Cardiac septum (tissue), 1 donor: ENCODE measurements at regions of chr9 and their contacts with region 1.

Region 1: DNA sequence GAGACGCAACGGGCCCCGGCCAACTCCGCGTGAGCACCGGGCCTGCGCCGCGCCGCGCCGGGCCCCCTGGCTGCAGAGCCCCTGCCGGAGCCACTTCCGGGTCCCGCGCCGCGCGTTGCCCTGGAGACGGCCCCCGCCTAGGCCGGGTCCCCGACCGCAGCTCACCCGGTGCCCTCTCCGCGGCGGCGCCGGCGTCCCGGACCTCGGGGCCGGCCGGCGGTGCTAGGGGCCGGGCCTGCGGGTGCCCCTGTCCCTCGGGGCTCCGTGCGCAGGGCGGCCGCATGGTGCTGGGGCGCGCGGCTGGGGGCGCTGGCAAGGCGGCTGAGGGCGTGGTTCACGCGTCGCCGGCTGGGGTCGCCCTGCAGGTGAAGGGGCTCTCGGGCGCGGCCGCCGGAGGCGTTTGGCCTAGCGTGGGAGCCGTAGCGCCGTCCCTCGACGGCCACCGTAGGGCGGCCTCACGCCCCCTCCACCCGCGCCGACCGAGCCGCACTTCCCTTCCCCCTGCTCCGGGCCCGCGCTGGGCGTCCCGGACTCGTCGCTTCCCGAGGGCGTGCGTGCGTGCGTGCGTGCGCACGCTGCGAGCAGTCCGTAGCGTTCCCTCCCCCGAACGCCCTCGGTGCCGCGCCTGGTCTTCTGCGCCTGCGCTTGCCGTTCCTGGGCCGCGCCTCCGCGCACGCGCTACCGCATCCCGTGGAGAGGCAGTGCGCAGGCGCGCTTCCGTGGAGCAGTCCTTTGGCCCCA is at the start of gene TMEM250:
- DNase-seq: peak; percentile 98
- total RNA-seq, gene TMEM250: 19.8 TPM

Region 2: GRCh38 chr9:135602789-135603481 is 515.6 kb before region 1 on chr9:
- intact Hi-C with region 1: loop called (anchors 5 kb)
- DNase-seq: no peak

Region 3: GRCh38 chr9:135864447-135865049 is 253.9 kb before region 1 on chr9:
- intact Hi-C with region 1: loop called (anchors 2 kb)
- DNase-seq: peak; percentile 78

Region 4: GRCh38 chr9:135961277-135961705 is 157.2 kb before region 1 on chr9 and contains the start of gene UBAC1:
- intact Hi-C with region 1: loop called (anchors 1 kb)
- DNase-seq: peak; percentile 98
- total RNA-seq, gene UBAC1: 90.3 TPM

Region 5: GRCh38 chr9:135978642-135979546 is 139.6 kb before region 1 on chr9:
- intact Hi-C with region 1: no loop called
- DNase-seq: no peak

Region 6: GRCh38 chr9:136093995-136094881 is 24.3 kb before region 1 on chr9:
- intact Hi-C with region 1: loop called (anchors 1 kb)
- DNase-seq: peak; percentile 89